ENCODE measurements at regions of chr19 and their contacts with region 1.

Region 1: GRCh38 chr19:19835560-19836038 is 14.0 kb upstream of the ZNF506 start:
- DNase-seq: no peak
- ATAC-seq: no peak
- H3K4me3 ChIP-seq: no peak overlapping the region
- H3K4me3 Mint-ChIP-seq: no peak overlapping the region
- H3K27ac ChIP-seq: no peak overlapping the region
- H3K27ac Mint-ChIP-seq: no peak overlapping the region
- H3K4me1 ChIP-seq: no peaks in the 10 kb centered on the region
- H3K4me1 Mint-ChIP-seq: no peaks in the 10 kb centered on the region
- H3K27me3 ChIP-seq: no peaks in the 10 kb centered on the region
- H3K27me3 Mint-ChIP-seq: no peaks in the 10 kb centered on the region
- CTCF ChIP-seq: no peak

Region 2: GRCh38 chr19:19911150-19911549 is 75.6 kb after region 1 on chr19:
- CTCF ChIA-PET with region 1: no interaction called
- POLR2A ChIA-PET with region 1: no interaction called
- intact Hi-C with region 1: no loop called
- DNase-seq: no peak
- ATAC-seq: no peak
- H3K4me3 ChIP-seq: no peak overlapping the region
- H3K4me3 Mint-ChIP-seq: no peak overlapping the region
- H3K27ac ChIP-seq: no peak overlapping the region
- H3K27ac Mint-ChIP-seq: no peak overlapping the region
- H3K4me1 ChIP-seq: no peaks in the 10 kb centered on the region
- H3K4me1 Mint-ChIP-seq: peaks cover 17% of the 10 kb centered on the region
- H3K27me3 ChIP-seq: no peaks in the 10 kb centered on the region
- H3K27me3 Mint-ChIP-seq: no peaks in the 10 kb centered on the region
- CTCF ChIP-seq: no peak

Region 3: GRCh38 chr19:20107301-20107700 is 271.7 kb after region 1 on chr19:
- CTCF ChIA-PET with region 1: no interaction called
- POLR2A ChIA-PET with region 1: no interaction called
- intact Hi-C with region 1: loop called in 1 of 2 experiments (anchors 5 kb)
- DNase-seq: no peak
- ATAC-seq: no peak
- H3K4me3 ChIP-seq: no peak overlapping the region
- H3K4me3 Mint-ChIP-seq: no peak overlapping the region
- H3K27ac ChIP-seq: no peak overlapping the region
- H3K27ac Mint-ChIP-seq: no peak overlapping the region
- H3K4me1 ChIP-seq: no peaks in the 10 kb centered on the region
- H3K4me1 Mint-ChIP-seq: no peaks in the 10 kb centered on the region
- H3K27me3 ChIP-seq: no peaks in the 10 kb centered on the region
- H3K27me3 Mint-ChIP-seq: no peaks in the 10 kb centered on the region
- CTCF ChIP-seq: no peak